Posterior vena cava (tissue), 2 donors: ENCODE measurements at regions of chr18 and their contacts with region 1.

Region 1: DNA sequence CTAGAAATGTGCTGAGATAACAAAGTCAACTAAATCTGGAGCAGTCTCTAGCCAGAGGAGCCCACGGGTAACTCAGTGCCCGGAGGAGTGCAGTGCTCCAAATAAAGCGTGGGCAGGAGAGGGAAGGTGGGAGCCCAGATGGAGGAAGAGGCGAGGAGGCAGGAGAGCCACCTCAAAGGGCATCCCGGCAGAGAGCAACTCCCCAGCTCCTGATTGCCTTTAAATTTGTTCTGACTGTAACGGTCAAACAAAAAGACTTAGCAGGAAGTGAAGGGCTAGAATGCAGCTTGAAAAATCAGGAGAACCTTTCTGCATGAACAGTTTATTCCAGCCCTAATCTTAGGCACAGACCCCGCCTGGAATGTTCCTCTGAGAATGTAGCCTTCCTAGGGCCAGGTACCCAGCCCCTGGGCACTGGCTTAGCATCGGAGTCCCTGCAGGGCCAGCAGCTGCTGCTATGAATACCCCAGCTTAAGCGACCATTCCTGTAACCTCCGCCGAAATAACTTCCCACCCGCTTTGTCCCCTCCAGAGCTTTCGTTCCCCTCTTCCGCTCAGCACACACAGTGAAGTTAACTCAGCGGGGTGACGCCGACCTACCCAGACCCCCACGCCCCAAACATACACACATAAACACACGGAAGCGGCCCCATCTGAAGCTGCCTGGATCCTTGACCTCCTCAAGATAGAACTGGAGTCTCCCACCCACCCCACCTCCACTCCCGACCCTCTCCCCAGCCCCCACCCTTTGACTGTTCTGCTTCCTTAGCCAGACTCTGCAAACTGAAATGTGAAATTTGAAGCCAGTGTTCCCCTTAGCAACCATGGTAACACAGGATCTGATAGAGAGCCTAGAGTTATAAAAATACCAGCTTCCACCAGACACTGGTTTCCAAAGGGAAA is 123.2 kb downstream of the SMAD7 start:
- DNase-seq: peak; percentile 77

Region 2: DNA sequence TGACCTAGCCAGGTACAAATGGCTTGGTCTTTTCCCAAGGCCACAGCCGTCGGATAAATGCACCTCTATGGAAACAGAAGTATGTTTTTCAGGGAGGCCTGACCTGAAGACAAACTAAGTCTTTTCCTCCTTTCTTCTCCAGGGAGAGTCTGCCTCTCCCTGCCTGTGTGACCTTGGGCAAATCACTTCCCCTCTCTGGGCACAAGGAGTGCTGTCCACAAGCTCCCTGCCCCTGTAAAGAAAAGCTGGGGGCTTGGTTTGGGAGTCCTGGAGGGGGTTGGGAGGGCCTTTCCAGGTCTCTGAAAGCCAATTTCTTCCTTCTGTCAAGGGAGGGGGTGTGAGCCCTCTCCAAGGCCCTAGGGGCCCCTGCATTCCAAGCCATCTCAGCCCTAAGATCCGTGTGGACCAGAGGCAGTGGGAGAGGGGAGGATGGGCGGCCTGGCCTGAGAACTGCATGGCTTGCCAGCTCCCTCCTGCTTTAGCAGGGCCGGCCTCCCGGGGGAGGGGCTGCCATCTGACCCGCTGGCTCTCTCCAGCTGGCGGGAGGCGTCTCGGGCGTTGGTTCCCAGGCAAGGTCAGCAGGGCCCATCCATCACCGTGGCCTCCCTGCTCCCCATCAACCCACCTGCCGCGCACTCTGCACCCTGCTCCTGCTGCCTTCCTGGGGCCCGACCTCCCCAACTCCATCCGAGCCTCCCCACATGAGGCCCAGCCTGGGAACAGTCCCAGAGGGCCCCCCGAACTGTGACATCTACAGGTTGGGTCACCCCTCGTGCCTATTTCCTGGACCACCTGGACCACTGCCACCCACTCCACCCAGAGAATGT is 61.8 kb after region 1 on chr18:
- intact Hi-C with region 1: no loop called
- DNase-seq: peak; percentile 89

Region 3: GRCh38 chr18:48928787-48929186 is 101.2 kb after region 1 on chr18:
- intact Hi-C with region 1: loop called in 1 of 2 experiments (anchors 5 kb)
- DNase-seq: no peak